Right ventricle myocardium superior (tissue), 1 donor: ENCODE measurements at regions of chr2 and their contacts with region 1.

Region 1: GRCh38 chr2:46657042-46657504 is 177.7 kb downstream of the TMEM247 start:
- DNase-seq: no peak
- ATAC-seq: peak; percentile 79

Region 2: DNA sequence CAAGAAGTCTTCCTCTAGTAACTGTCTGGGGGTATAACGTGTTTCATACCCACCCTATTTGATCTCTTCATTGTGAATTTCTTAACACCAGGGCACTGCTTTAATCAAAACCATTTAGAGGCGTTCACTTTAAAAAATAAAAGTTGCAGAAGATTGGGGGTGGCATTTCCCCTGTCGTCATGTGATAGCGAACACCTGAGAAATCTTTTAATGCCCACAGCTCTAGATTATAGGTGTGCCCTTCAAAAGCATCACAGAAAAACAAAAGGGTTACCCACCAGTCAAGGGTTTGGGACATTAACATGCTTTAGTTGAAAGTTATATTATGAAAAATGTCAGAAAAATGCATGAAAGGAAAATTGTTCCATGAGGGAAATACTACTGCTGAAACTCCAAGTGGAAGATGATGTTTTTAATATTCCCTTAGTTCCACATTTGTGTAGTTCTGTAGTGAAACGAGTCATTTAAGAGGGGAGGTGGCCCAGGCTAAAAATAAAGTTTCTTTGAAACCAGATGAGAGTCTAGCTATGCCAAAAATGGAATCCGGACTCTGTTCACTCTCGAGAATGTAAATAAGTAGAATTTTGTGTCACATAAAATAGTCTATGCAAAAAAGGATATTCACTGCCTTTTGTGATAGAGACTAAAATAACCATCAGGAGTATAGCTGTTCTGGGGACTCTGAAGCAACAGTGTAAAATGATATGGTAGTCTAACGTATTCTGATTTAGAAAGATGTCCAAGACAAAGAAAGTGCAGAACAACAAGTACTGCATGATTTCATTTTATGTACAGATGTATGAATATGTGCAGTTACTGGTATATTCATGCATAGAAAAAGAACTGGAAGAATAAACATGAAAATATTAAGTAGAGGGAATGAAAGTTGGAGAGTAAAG is 82.4 kb before region 1 on chr2:
- intact Hi-C with region 1: no loop called
- DNase-seq: no peak
- ATAC-seq: no peak

Region 3: DNA sequence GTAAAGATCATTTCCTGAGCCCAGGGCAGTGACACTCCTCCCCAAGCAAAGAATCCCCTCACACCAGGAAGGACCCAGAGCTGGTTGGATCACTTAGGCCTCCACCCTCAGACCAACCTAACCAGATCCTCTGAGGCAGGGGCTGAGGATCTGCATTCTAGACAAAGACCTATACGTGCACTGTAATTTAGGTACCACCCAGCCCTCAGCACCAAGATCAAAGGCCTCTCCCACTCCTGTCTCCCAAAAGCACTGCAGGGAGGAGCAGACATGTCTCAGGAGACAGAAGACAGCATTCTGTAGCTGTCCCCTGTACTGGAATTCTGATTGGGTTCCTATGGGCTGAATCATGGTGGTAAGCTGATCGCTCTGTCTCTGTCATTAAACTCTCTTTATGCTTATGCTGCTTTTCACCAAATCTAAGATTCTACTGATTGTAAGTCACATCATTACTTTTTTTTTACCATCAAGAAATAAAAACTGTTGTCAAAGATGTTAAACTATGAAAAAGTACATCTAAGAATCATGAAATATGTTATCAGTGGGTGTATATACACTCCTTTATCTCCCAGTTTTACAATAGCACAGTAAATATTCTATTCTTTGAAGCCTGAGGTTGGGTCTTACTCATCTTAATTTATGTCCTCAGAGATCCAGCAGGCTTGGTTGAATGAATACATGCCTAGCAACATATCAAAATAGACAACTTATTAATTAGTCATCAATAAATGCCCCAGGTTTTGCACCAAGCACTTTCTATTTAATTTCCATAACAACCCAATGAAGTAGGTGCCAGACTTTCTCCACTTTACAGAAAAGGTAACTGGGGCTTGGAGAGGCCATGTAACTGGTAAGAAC is 230.2 kb after region 1 on chr2:
- intact Hi-C with region 1: loop called (anchors 5 kb)
- DNase-seq: no peak
- ATAC-seq: no peak